Activated CD8-positive, alpha-beta memory T cell treated with anti-CD3 and anti-CD28 coated beads, Interleukin-2, amount 10 ng/mL, durations not matched to agents 7 days and 5 days (primary cell): ENCODE measurements at regions of chr10 and their contacts with region 1.

Region 1: DNA sequence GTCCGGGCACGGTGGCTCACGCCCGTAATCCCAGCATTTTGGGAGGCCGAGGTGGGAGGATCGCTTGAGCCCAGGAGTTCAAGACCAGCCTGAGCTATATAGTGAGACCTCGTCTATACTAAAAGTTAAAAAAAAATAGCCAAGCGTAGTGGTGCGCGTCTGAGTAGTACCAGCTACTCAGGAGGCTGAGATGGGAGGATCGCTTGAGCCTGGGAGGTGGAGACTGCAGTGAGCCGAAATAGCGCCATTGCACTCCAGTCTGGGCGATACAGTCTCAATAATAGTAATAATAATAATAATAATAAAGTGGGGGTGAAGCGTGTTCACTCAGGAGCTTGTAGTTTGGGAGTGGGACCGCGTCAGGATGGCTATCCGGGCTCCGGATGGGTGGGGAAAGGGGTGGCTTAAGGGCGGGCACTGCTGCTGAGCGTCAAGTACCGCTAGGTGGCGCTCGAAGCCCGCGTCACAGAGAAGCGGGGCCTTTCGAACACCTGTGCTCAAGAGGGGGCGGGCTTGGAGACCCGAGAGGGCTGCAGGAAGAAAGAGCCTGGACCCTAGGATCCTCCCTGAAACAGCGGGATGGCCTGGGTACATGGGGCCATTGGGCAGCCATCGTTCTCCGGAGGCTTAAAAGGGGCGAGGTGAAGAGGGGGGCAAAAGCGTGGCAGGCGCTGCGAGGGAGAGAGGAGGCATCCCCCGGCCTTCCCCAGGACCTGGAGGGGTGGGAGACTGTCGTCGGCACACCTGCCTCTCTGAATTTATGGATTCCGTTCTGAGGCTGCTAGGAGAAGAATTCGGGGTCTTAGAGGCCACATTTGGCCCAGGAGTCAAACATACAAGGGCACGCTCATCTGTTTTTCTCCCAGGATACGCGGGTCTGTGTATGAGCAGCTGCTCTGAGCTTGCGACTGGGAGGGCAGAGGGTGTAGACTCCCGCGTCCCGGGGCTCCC is 14.5 kb downstream of the LBX1 start:
- DNase-seq: peak; percentile 73
- ATAC-seq: peak; percentile 79
- H3K4me3 Mint-ChIP-seq: no peak overlapping the region
- H3K27ac Mint-ChIP-seq: no peak overlapping the region
- H3K4me1 Mint-ChIP-seq: peaks cover 19% of the 10 kb centered on the region
- H3K27me3 Mint-ChIP-seq: peaks cover 79% of the 10 kb centered on the region

Region 2: DNA sequence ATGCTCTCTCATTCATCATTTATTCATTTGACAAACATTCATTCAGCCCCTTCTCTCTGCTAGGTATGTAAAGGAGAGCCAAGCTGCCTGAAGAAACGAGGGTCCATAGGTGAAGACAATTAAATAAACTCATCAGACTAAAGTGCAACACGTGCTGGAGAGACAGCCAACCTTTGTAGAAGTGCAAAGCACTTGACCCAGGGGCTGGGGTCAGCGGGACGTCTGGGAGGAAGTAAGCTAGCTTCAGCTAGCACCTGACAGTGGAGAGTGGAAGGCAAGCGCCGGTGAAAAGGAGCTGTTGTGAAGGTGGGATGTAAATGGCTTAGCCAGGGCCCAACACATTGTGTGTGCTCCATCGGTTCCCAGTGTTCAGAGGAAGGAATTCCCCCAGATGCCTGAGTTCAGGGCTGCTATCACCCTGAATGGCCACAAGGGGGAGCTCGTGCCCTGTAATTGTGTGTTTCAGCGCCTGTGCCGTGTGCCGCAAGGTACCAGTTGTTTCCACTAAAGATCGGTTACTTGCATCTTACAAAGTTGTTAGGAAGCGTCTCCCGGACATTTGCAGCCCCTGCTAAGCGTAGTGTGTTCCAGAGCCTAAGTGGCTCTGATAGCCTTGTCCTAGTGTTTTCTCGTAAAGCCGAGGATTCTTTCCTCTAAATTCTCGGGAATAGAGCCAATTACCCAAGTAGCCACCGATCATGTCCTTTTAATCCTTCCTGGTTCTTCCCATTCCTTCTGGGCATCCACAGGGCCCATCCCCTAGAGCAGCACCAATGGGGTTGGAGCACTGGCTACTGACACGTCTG is 53.0 kb before region 1 on chr10:
- CTCF ChIA-PET with region 1: interaction called, 17 read pairs
- DNase-seq: peak; percentile 74
- ATAC-seq: peak; percentile 68
- H3K4me3 Mint-ChIP-seq: no peak overlapping the region
- H3K27ac Mint-ChIP-seq: no peak overlapping the region
- H3K4me1 Mint-ChIP-seq: peaks cover 16% of the 10 kb centered on the region
- H3K27me3 Mint-ChIP-seq: peaks cover 84% of the 10 kb centered on the region

Region 3: GRCh38 chr10:101195921-101196320 is 18.8 kb before region 1 on chr10:
- CTCF ChIA-PET with region 1: no interaction called
- DNase-seq: no peak
- ATAC-seq: no peak
- H3K4me3 Mint-ChIP-seq: no peak overlapping the region
- H3K27ac Mint-ChIP-seq: no peak overlapping the region
- H3K4me1 Mint-ChIP-seq: no peaks in the 10 kb centered on the region
- H3K27me3 Mint-ChIP-seq: peaks cover 20% of the 10 kb centered on the region

Region 4: DNA sequence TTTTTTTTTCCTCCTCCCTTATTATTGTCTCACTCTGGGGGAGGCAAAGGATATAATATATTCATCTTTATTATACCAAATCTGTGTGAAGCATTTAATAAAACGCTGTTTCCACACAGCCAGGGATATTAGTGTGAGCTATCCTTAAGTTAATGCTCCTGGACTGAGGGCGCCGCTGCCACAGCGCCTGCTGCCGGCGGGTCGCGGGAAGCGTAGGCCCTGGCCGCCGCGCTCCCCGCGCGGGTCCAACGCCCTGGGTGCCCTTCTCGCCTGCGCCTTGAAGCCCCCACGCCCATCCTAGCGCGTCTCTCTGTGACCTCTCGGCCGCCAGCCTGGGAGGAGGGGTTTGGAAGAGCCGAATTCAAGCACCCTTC is 24.0 kb after region 1 on chr10:
- CTCF ChIA-PET with region 1: interaction called, 33 read pairs
- DNase-seq: no peak
- ATAC-seq: peak; percentile 55
- H3K4me3 Mint-ChIP-seq: no peak overlapping the region
- H3K27ac Mint-ChIP-seq: no peak overlapping the region
- H3K4me1 Mint-ChIP-seq: peaks cover 8% of the 10 kb centered on the region
- H3K27me3 Mint-ChIP-seq: peaks cover 69% of the 10 kb centered on the region

Region 5: DNA sequence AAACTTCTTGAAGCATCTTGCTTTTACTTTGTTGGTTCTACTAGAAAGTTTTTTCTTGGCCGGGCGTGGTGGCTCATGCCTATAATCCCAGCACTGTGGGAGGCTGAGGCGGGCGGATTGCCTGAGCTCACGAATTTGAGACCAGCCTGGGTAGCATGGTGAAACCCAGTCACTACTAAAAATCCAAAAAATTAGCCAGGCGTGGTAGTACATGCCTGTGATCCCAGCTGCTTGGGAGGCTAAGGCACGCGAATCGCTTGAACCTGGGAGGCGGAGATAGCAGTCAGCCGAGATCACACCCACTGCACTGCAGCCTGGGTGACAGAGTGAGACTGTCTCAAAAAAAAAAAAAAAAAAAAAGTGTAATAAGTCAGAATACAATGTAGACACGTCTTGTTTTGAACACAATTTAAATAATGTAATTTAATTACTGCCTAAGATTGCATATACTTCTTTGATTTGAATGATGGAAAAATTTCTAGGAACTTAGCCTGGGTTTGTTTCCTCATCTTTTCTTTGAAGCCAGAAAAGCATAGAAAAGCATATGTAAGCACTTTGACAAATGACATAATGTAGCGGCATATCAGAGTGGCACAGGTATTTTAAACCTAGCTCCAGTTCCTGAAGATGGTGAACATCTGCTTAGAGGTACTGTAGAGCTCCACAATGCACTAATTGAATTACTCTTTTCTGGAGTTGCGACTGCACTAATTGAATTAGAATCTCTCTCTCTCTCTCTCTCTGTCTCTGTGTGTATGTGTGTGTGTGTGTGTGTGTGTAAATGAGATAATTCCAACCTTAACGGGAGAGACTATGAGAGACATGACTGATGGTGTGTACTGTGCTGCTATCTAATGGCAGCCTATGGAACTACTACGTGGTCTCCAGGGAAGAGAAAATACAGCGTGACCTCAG is 227.1 kb after region 1 on chr10:
- CTCF ChIA-PET with region 1: interaction called, 15 read pairs
- DNase-seq: no peak
- ATAC-seq: peak; percentile 76
- H3K4me3 Mint-ChIP-seq: no peak overlapping the region
- H3K27ac Mint-ChIP-seq: no peak overlapping the region
- H3K4me1 Mint-ChIP-seq: peaks cover 3% of the 10 kb centered on the region
- H3K27me3 Mint-ChIP-seq: no peaks in the 10 kb centered on the region

Region 6: DNA sequence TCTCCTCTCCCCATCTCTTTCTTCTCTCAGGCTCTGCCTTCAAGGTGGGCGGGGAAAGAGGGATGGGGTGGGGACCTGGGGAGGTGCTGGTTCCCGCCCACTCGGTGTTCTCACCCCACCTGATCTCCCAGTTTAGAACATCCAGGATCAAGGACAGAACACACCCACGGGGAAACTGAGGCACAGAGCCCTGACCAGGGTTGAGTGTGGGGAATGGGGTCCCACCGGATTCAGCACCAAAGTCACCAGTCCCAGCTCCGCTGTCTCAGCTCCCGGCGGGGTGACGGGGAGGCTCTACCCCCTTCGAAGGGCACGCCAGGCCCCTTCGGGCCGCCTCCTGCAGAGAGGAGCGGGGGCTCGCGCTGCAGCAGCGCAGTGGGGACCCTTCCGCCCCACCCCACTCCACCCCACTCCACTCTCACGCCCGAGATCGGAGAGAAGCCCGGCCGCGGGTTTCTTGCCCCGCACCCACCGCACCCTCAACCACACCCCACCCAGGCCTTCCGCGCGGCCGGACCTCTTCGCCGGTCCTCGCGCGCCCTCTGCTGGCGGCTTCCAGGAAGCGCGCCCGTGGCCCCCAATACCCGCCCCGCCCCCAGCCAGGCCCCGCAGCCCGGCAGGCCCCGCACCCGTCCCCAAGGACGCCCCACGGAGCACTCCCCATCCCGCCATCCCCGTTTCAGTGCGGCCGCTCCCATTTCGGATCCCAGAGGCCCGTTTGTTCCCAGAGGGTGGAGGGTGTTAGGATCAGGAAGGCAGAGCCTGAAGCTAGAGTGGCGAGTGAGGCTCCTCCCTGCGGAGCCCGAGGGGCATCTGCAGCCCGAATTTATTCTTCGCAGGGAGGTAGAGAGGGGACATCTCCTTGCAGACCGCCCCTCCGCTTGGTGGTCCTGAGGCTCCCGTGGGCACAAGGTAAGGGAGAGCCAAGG is 355.4 kb after region 1 on chr10:
- CTCF ChIA-PET with region 1: interaction called, 46 read pairs
- DNase-seq: peak; percentile 83
- ATAC-seq: peak; percentile 88
- H3K4me3 Mint-ChIP-seq: peak overlapping the region; percentile 71
- H3K27ac Mint-ChIP-seq: no peak overlapping the region
- H3K4me1 Mint-ChIP-seq: peaks cover 17% of the 10 kb centered on the region
- H3K27me3 Mint-ChIP-seq: peaks cover 45% of the 10 kb centered on the region

Region 7: GRCh38 chr10:102072673-102073527 is 858.2 kb after region 1 on chr10:
- CTCF ChIA-PET with region 1: no interaction called
- DNase-seq: peak; percentile 86
- ATAC-seq: peak; percentile 94
- H3K4me3 Mint-ChIP-seq: no peak overlapping the region
- H3K27ac Mint-ChIP-seq: no peak overlapping the region
- H3K4me1 Mint-ChIP-seq: no peaks in the 10 kb centered on the region
- H3K27me3 Mint-ChIP-seq: no peaks in the 10 kb centered on the region